A673 (cell line): ENCODE measurements at regions of chr22 and their contacts with region 1.

Region 1: GRCh38 chr22:30457981-30458380 is 13.8 kb downstream of the SEC14L3 start:
- DNase-seq: no peak
- H3K4me3 ChIP-seq: no peak overlapping the region
- H3K27ac ChIP-seq: no peak overlapping the region
- H3K4me1 ChIP-seq: no peaks in the 10 kb centered on the region
- H3K27me3 ChIP-seq: no peaks in the 10 kb centered on the region
- CTCF ChIP-seq: no peak

Region 2: GRCh38 chr22:30262917-30263741 is 194.9 kb before region 1 on chr22:
- CTCF ChIA-PET with region 1: interaction called, 10 read pairs
- POLR2A ChIA-PET with region 1: no interaction called
- intact Hi-C with region 1: no loop called
- DNase-seq: peak; percentile 79
- H3K4me3 ChIP-seq: no peak overlapping the region
- H3K27ac ChIP-seq: no peak overlapping the region
- H3K4me1 ChIP-seq: no peaks in the 10 kb centered on the region
- H3K27me3 ChIP-seq: no peaks in the 10 kb centered on the region
- CTCF ChIP-seq: peak; percentile 94